Ascending aorta (tissue), 2 donors: ENCODE measurements at regions of chr19 and their contacts with region 1.

Region 1: GRCh38 chr19:56507446-56508289 is at the start of gene ZNF471:
- DNase-seq: peak; percentile 94 to 99
- H3K4me3 ChIP-seq: peak within 1 kb of the TSS; percentile 56 to 94
- H3K27ac ChIP-seq: peak within 1 kb of the TSS; percentile 92 to 100
- H3K4me1 ChIP-seq: peaks cover 0 to 5% of the 10 kb centered on the region in 2 donors
- H3K27me3 ChIP-seq: no peaks in the 10 kb centered on the region
- CTCF ChIP-seq: no peak
- total RNA-seq, gene ZNF471: 4.8 TPM

Region 2: DNA sequence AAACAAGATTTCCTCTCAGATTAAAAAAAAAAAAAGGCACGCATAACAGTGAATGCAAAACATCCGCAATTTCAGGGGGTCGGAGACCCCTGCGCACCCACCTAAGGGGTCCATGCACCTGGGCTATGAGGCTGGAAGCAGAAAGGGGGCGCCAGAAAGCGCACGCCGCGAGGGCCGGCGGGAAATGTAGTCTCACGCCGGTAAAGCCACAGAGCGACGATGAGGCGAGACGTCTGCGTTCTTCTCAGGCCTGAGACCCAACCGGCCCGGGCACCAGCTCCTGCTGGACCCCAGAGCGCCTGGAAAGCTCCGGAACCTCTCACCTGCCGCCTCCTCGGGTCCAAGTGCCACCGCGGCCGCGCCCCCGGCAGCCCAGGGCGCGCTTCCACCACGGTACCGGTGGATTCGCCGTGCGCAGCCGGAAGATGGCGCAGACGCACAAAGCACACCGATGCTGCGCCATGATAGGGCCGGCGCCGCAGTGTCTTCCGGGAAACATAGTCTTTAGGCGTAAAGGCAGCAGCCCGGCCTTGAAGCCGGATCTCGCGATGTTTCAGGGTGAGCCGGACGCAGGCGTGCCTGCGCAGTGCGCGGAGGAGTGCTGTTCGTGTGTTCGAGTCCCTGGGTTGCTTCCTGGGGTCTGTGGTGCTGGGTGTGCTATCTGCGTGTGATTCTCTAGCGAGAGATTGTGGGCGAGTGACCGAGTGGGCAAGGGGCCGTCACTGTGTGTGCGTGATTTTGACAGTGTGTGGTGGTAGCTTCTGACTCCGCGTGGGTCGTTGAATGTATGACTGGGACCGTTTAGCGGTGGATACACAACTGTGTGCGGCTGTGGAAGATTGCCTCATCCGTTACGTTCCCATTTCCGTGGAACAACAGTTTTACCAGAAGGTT is 114.3 kb before region 1 on chr19 and contains the start of gene ZNF582:
- intact Hi-C with region 1: loop called (anchors 1 kb)
- DNase-seq: peak; percentile 89 to 98
- H3K4me3 ChIP-seq: peak within 1 kb of the TSS; percentile 67 to 85
- H3K27ac ChIP-seq: peak within 1 kb of the TSS; percentile 91 to 93
- H3K4me1 ChIP-seq: peaks cover 0 to 3% of the 10 kb centered on the region in 2 donors
- H3K27me3 ChIP-seq: no peaks in the 10 kb centered on the region
- CTCF ChIP-seq: peak; percentile 49 to 80 (median 69)
- total RNA-seq, gene ZNF582: 0.43 TPM

Region 3: DNA sequence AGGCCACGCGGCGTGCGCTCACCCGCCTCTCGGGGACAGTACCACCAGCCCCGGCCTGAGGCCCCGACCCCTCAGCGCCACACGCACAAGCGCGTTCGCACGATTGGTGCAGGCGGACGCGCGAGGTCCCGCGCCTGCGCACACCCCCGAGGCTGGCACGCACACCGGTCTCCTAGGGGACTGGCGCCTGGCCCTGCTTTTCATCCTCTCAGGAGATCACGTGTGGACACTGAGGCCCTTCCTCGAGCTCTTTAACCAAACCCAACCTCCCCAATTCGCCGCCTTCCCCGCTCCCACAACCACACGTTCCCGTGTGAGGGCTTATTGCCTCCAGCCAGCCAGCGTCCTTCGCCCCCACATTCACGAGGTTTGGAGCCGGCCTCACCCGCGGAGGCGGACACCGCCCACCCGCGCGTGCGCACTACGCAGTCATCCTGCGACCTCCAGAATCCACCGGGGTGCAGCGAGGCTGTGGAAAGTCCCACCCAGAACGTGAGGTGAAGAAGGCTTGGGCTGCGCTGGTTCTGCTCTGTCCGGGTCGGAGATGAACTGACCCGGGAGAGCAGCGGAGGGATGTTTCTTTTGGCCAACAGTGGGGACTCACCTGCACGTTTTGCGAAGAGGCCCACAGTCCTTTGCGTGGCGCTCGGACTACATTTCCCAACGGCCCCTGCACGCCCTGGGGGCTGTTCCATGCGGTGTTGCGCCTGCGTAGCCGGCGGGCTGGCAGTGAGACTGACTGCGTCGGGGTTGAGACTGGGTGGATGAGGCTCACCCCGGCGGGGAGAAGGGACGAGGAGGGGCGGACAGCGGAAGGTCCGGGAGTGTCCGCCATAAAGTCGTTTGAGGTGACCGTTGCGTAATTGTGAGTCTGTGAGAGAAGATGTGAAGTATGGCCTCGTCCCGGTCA is 30.0 kb before region 1 on chr19:
- intact Hi-C with region 1: loop called (anchors 2 kb)
- DNase-seq: peak; percentile 57 to 91
- H3K4me3 ChIP-seq: peak overlapping the region; percentile 61 to 80
- H3K27ac ChIP-seq: peak overlapping the region; percentile 52 to 84
- H3K4me1 ChIP-seq: peaks cover 0 to 7% of the 10 kb centered on the region in 2 donors
- H3K27me3 ChIP-seq: no peaks in the 10 kb centered on the region
- CTCF ChIP-seq: no peak

Region 4: GRCh38 chr19:56525214-56525860 is 17.7 kb after region 1 on chr19:
- intact Hi-C with region 1: no loop called
- DNase-seq: no peak
- H3K4me3 ChIP-seq: no peak overlapping the region
- H3K27ac ChIP-seq: no peak overlapping the region
- H3K4me1 ChIP-seq: no peaks in the 10 kb centered on the region
- H3K27me3 ChIP-seq: no peaks in the 10 kb centered on the region
- CTCF ChIP-seq: no peak

Region 5: GRCh38 chr19:56538254-56538760 is 30.6 kb after region 1 on chr19:
- intact Hi-C with region 1: loop called (anchors 1 kb)
- DNase-seq: peak; percentile 45 to 93
- H3K4me3 ChIP-seq: peak overlapping the region; percentile 85 to 92
- H3K27ac ChIP-seq: peak overlapping the region; percentile 91 to 94
- H3K4me1 ChIP-seq: peaks cover 0 to 10% of the 10 kb centered on the region in 2 donors
- H3K27me3 ChIP-seq: no peaks in the 10 kb centered on the region
- CTCF ChIP-seq: no peak

Region 6: GRCh38 chr19:56567274-56568120 is 59.8 kb after region 1 on chr19 and contains the start of gene ZNF470:
- intact Hi-C with region 1: loop called (anchors 2 kb)
- DNase-seq: peak; percentile 82 to 97
- H3K4me3 ChIP-seq: peak within 1 kb of the TSS; percentile 82 to 90
- H3K27ac ChIP-seq: peak within 1 kb of the TSS; percentile 76 to 80
- H3K4me1 ChIP-seq: peaks cover 0 to 4% of the 10 kb centered on the region in 2 donors
- H3K27me3 ChIP-seq: no peaks in the 10 kb centered on the region
- CTCF ChIP-seq: no peak
- total RNA-seq, gene ZNF470: 0.21 TPM

Region 7: DNA sequence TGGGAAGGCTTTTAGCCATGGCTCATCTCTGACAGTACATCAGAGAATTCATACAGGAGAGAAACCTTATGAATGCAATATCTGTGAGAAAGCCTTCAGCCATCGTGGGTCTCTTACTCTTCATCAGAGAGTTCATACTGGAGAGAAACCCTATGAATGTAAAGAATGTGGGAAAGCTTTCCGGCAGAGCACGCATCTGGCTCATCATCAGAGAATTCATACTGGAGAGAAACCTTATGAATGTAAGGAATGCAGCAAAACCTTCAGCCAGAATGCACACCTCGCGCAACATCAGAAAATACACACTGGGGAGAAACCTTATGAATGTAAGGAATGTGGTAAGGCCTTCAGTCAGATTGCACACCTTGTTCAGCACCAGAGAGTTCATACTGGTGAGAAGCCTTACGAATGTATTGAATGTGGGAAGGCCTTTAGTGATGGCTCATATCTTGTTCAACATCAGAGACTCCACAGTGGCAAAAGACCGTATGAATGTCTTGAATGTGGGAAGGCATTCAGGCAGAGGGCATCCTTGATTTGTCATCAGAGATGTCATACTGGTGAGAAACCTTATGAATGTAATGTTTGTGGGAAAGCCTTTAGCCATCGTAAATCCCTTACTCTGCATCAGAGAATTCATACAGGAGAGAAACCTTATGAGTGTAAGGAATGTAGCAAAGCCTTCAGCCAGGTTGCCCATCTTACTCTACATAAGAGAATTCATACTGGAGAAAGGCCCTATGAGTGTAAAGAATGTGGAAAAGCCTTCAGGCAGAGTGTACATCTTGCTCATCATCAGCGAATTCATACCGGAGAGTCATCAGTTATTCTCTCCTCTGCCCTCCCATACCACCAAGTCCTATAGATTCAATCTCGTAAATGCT is 70.3 kb after region 1 on chr19:
- intact Hi-C with region 1: no loop called
- DNase-seq: no peak
- H3K4me3 ChIP-seq: no peak overlapping the region
- H3K27ac ChIP-seq: no peak overlapping the region
- H3K4me1 ChIP-seq: no peaks in the 10 kb centered on the region
- H3K27me3 ChIP-seq: no peaks in the 10 kb centered on the region
- CTCF ChIP-seq: no peak